K562 (cell line): ENCODE measurements at regions of chr2 and their contacts with region 1.

Region 1: GRCh38 chr2:68251187-68251854 is 1.0 kb downstream of the PPP3R1 start:
- DNase-seq: peak; percentile 61 to 88 (median 68)
- ATAC-seq: peak; percentile 80
- H3K4me3 ChIP-seq: peak overlapping the region; percentile 75
- H3K27ac ChIP-seq: peak overlapping the region; percentile 97
- H3K4me1 ChIP-seq: peaks cover 10 to 44% of the 10 kb centered on the region in 2 experiments; a peak in 4 of 5 replicates
- H3K27me3 ChIP-seq: no peaks in the 10 kb centered on the region
- CTCF ChIP-seq: peak; percentile 78 to 82 (median 78)
- EP300 ChIP-seq: 0 out of 2 replicates have a peak, but pooled peaks have one; percentile 12
- POLR2A ChIP-seq: peak; percentile 53
- RAD21 ChIP-seq: peak; percentile 49 to 57

Region 2: DNA sequence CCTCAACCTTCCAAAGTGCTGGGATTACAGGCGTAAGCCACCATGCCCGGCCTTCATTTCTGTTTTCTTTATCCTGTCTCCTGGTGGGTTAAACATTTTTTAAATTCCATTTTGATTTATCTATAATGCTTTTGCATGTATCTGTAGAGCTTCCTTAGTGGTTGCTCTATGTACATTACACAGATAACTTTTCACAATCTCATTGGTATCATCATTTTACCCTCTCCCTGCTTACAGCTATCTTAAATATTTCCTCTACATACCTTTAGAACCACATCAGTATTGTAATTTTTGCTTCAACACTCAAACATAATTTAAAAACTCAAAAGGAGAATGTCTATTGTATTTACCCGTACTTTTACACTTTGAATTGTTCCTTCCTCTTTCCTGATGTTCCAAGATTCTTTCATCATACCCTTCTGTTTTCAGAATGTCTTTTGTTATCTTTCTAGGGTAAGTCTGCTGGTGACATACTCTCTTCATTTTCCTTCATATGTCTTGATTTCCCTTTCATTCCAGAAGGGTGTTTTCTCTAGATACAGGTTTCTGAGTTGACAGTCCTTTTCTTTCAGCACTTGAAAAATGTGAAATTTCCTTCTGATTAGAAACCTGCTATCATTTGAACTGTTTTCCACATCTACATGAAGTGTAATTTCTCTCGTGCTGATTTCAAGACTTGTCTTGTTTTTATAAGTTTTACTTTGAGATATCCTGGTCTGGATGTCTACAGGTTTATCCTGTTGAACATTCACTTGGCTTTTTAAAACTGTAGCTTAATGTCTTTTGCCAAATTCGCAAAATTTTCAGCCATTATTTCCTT is 20.9 kb before region 1 on chr2:
- CTCF ChIA-PET with region 1: no interaction called
- POLR2A ChIA-PET with region 1: interaction called, 13 read pairs
- in situ Hi-C with region 1: no loop called
- intact Hi-C with region 1: loop called (anchors 2 kb)
- DNase-seq: no peak
- ATAC-seq: peak; percentile 48
- H3K4me3 ChIP-seq: no peak overlapping the region
- H3K27ac ChIP-seq: peak overlapping the region; percentile 56; the same call in 1 of the 3 replicates
- H3K4me1 ChIP-seq: peaks cover 9 to 15% of the 10 kb centered on the region in 2 experiments; a peak in 4 of 5 replicates
- H3K27me3 ChIP-seq: no peaks in the 10 kb centered on the region
- CTCF ChIP-seq: no peak
- EP300 ChIP-seq: no peak
- POLR2A ChIP-seq: no peak
- RAD21 ChIP-seq: no peak

Region 3: DNA sequence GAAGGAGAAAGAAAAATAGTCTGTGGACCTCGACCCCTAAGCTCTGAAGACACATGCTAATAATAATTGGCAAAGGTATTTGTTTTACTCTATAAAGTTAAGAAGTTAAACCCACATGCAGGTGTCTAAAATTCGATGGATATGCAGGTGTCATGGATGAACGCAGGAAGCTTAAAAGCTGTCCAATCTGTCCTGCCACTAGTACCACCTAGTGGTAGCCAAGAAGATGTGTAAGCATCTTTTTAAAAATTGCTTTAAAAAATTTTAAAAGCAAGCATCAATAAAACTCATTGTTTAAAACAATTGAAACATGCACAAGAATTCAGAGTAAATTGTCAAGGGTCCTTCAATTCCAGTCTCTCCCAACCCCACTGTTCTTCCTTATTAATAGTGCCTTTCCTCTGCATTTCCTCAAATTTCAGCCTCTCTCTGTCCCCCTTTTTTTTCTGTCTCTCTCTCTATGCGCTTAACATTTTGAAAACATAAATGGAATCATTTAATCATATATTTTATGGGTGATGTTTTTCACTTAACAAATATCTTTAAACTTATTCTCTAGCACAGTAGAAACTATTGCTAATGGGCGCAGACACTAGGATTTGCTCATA is 31.6 kb after region 1 on chr2:
- CTCF ChIA-PET with region 1: no interaction called
- POLR2A ChIA-PET with region 1: no interaction called
- in situ Hi-C with region 1: no loop called
- intact Hi-C with region 1: loop called (anchors 1 kb)
- DNase-seq: peak; percentile 56 to 62 (median 58)
- ATAC-seq: peak; percentile 75
- H3K4me3 ChIP-seq: no peak overlapping the region
- H3K27ac ChIP-seq: no peak overlapping the region
- H3K4me1 ChIP-seq: peaks cover 8 to 24% of the 10 kb centered on the region in 2 experiments; a peak in 4 of 5 replicates
- H3K27me3 ChIP-seq: no peaks in the 10 kb centered on the region
- CTCF ChIP-seq: peak; percentile 71 to 87 (median 71)
- EP300 ChIP-seq: no peak
- POLR2A ChIP-seq: no peak
- RAD21 ChIP-seq: peak; percentile 67 to 78

Region 4: DNA sequence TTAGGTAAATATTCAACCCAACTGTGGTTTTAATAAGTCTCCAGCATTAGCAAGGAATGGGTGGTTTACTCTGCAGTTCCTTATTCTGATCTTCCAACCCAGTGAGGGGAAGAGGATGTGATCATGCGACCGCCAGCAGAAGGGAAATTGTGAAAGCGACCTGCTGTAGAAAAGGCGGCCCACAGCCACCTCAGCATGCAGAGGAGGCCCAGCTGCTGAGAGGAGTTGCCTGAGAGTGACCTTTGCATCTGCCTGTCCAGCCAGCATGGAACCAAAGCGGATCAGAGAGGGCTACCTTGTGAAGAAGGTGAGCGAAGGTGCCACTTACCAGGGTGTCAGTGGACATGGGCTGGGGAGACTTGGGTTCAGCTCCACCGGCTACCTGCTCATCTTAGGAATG is 113.8 kb after region 1 on chr2 and contains the start of gene PLEK:
- CTCF ChIA-PET with region 1: no interaction called
- POLR2A ChIA-PET with region 1: no interaction called
- in situ Hi-C with region 1: no loop called
- intact Hi-C with region 1: no loop called
- DNase-seq: no peak
- ATAC-seq: no peak
- H3K4me3 ChIP-seq: no peak within 1 kb of the TSS
- H3K27ac ChIP-seq: no peak within 1 kb of the TSS
- H3K4me1 ChIP-seq: peaks cover 0 to 15% of the 10 kb centered on the region in 2 experiments; a peak in 1 of 5 replicates
- H3K27me3 ChIP-seq: no peaks in the 10 kb centered on the region
- CTCF ChIP-seq: no peak
- EP300 ChIP-seq: no peak
- POLR2A ChIP-seq: no peak
- RAD21 ChIP-seq: no peak
- polyA plus RNA-seq, gene PLEK: 0.49 to 0.55 TPM

Region 5: GRCh38 chr2:68669651-68670050 is 418.3 kb after region 1 on chr2:
- CTCF ChIA-PET with region 1: no interaction called
- POLR2A ChIA-PET with region 1: no interaction called
- in situ Hi-C with region 1: no loop called
- intact Hi-C with region 1: no loop called
- DNase-seq: no peak
- ATAC-seq: no peak; the same call in 2 of the 3 replicates
- H3K4me3 ChIP-seq: no peak overlapping the region
- H3K27ac ChIP-seq: no peak overlapping the region
- H3K4me1 ChIP-seq: no peaks in the 10 kb centered on the region; a peak in 1 of 5 replicates
- H3K27me3 ChIP-seq: no peaks in the 10 kb centered on the region
- CTCF ChIP-seq: peak in 2 of 3 experiments; percentile 9 to 19; a peak in 2 of 6 replicates
- EP300 ChIP-seq: no peak
- POLR2A ChIP-seq: no peak
- RAD21 ChIP-seq: peak in 1 of 2 experiments; percentile 25; a peak in 1 of 4 replicates